ENCODE measurements at regions of chr3 and their contacts with region 1.

Region 1: GRCh38 chr3:105686278-105686897 is 182.4 kb downstream of the CBLB start:
- DNase-seq: no peak
- ATAC-seq: no peak
- H3K4me3 ChIP-seq: no peak overlapping the region
- H3K4me1 ChIP-seq: no peaks in the 10 kb centered on the region
- CTCF ChIP-seq: peak; percentile 38

Region 2: GRCh38 chr3:105868742-105869530 is 182.5 kb after region 1 on chr3 and contains the start of gene CBLB:
- intact Hi-C with region 1: loop called in 1 of 2 experiments (anchors 10 kb)
- DNase-seq: peak; percentile 93 to 95 (median 93)
- ATAC-seq: peak; percentile 92
- H3K4me3 ChIP-seq: peak within 1 kb of the TSS; percentile 97
- H3K4me1 ChIP-seq: peaks cover 19% of the 10 kb centered on the region
- CTCF ChIP-seq: no peak
- total RNA-seq, gene CBLB: 41.7 to 52.2 (median 51.0) TPM

Region 3: DNA sequence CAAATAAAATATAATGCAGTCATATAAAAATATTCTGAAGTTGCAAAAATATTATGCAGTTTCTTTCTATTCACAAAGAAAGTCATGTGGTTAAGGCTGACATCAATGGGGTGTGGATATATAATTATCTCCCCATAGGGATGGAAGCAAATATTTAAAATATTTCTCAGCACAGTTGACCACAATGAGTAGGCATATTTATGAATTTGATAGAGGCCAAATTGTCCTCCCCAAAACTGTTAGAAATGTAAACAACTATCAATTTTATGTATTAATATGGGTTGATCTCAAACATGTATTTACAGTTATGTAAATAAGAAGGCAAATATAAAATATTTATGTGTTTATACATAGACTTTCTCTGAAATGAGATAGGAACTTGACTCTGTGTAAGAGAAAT is 428.5 kb after region 1 on chr3:
- intact Hi-C with region 1: no loop called
- DNase-seq: no peak
- ATAC-seq: no peak
- H3K4me3 ChIP-seq: no peak overlapping the region
- H3K4me1 ChIP-seq: no peaks in the 10 kb centered on the region
- CTCF ChIP-seq: no peak

Region 4: GRCh38 chr3:106609666-106610301 is 923.4 kb after region 1 on chr3:
- intact Hi-C with region 1: loop called in 1 of 2 experiments (anchors 5 kb)
- DNase-seq: peak in 2 of 3 donors; percentile 12 to 78
- ATAC-seq: peak; percentile 69
- H3K4me3 ChIP-seq: no peak overlapping the region
- H3K4me1 ChIP-seq: no peaks in the 10 kb centered on the region
- CTCF ChIP-seq: peak; percentile 48

Measured in mucosa of descending colon (tissue), 3 donors.